ENCODE measurements at regions of chr6 and their contacts with region 1.

Region 1: DNA sequence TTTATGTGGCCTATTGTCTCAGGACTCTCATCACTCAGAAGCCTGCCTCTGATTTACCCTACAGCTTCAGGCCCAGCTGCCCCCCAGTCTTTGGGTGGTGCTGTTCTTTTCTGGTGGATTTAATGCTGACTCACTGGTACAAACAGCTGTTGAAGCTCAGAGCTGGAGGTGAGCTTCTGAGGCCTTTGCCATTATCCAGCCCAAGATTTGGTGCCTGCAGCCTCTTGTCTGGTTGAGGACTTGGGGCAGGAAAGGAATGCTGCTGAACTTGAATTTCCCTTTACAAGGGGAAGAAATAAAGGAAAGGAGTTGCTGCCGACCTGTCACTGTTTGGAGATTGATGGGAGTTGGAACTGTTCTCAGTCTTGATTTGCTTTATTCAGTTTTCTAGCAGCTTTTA is 19.8 kb downstream of the ABCF1 start:
- DNase-seq: peak in 2 of 4 experiments; percentile 29 to 36
- ATAC-seq: peak; percentile 60; the same call in 2 of the 3 replicates
- H3K4me3 ChIP-seq: no peak overlapping the region
- H3K27ac ChIP-seq: peak overlapping the region; percentile 8; the same call in 2 of the 3 replicates
- H3K4me1 ChIP-seq: peaks cover 3 to 4% of the 10 kb centered on the region in 2 experiments; a peak in 3 of 5 replicates
- H3K27me3 ChIP-seq: no peaks in the 10 kb centered on the region
- CTCF ChIP-seq: no peak
- EP300 ChIP-seq: no peak
- POLR2A ChIP-seq: no peak
- RAD21 ChIP-seq: no peak

Region 2: GRCh38 chr6:30571075-30571768 is 19.8 kb before region 1 on chr6 and contains the start of gene ABCF1:
- CTCF ChIA-PET with region 1: no interaction called
- POLR2A ChIA-PET with region 1: interaction called, 21 read pairs
- in situ Hi-C with region 1: no loop called
- intact Hi-C with region 1: no loop called
- DNase-seq: peak; percentile 99
- ATAC-seq: peak; percentile 95
- H3K4me3 ChIP-seq: peak within 1 kb of the TSS; percentile 67
- H3K27ac ChIP-seq: peak within 1 kb of the TSS; percentile 92
- H3K4me1 ChIP-seq: peaks cover 24 to 35% of the 10 kb centered on the region in 2 experiments; a peak in 4 of 5 replicates
- H3K27me3 ChIP-seq: no peaks in the 10 kb centered on the region
- CTCF ChIP-seq: 0 out of 6 replicates have a peak, but pooled peaks of 1 of the 3 experiments have one; percentile 13
- EP300 ChIP-seq: peak; percentile 41; the same call in 1 of the 2 replicates
- POLR2A ChIP-seq: peak; percentile 99
- RAD21 ChIP-seq: no peak
- polyA plus RNA-seq, gene ABCF1: 41.6 to 43.5 TPM

Region 3: DNA sequence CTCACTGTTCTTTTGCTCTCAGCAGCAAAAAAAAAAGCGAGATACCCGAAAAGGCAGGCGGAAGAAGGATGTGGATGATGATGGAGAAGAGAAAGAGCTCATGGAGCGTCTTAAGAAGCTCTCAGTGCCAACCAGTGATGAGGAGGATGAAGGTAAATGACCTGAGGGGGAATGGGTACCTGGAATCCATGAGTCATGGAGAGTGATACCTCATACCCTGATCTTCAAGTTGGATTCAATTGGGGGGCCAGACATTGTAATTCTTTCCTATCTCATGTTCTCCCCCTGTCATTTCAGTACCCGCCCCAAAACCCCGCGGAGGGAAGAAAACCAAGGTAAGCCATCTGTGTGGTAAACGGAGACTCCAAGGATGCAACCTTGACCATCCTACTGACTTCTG is 12.9 kb before region 1 on chr6:
- CTCF ChIA-PET with region 1: no interaction called
- POLR2A ChIA-PET with region 1: interaction called, 21 read pairs
- in situ Hi-C with region 1: no loop called
- intact Hi-C with region 1: no loop called
- DNase-seq: no peak
- ATAC-seq: no peak
- H3K4me3 ChIP-seq: no peak overlapping the region
- H3K27ac ChIP-seq: no peak overlapping the region
- H3K4me1 ChIP-seq: peaks cover 10 to 13% of the 10 kb centered on the region in 2 experiments; a peak in 4 of 5 replicates
- H3K27me3 ChIP-seq: no peaks in the 10 kb centered on the region
- CTCF ChIP-seq: no peak
- EP300 ChIP-seq: no peak
- POLR2A ChIP-seq: no peak
- RAD21 ChIP-seq: no peak

Region 4: GRCh38 chr6:30611150-30611855 is 20.3 kb after region 1 on chr6:
- CTCF ChIA-PET with region 1: no interaction called
- POLR2A ChIA-PET with region 1: interaction called, 310 read pairs
- in situ Hi-C with region 1: no loop called
- intact Hi-C with region 1: no loop called
- DNase-seq: no peak
- ATAC-seq: no peak
- H3K4me3 ChIP-seq: no peak overlapping the region
- H3K27ac ChIP-seq: no peak overlapping the region
- H3K4me1 ChIP-seq: peaks cover 0 to 21% of the 10 kb centered on the region in 2 experiments; a peak in 3 of 5 replicates
- H3K27me3 ChIP-seq: no peaks in the 10 kb centered on the region
- CTCF ChIP-seq: no peak
- EP300 ChIP-seq: no peak
- POLR2A ChIP-seq: peak; percentile 55
- RAD21 ChIP-seq: no peak

Region 5: DNA sequence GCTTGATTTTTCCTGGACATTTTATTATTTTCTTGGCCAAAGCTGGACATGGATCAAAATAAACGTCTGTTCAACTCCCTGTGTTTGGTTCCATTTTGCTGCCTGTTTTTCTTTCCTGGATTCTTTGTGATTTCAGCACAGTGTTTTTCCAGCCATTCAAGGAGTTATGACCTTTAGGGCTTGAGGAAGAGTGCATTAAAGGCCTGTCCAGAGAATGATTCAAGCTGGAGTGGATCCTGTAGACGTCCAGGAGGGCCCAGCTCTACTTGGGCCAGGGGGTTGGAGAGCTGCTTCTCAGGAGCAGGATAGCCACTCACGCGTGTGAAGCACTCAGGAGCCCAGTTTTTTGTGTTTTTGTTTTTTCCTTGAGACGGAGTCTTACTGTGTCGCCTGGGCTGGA is 209.9 kb after region 1 on chr6:
- CTCF ChIA-PET with region 1: no interaction called
- POLR2A ChIA-PET with region 1: no interaction called
- in situ Hi-C with region 1: no loop called
- intact Hi-C with region 1: no loop called
- DNase-seq: no peak
- ATAC-seq: no peak
- H3K4me3 ChIP-seq: no peak overlapping the region
- H3K27ac ChIP-seq: no peak overlapping the region
- H3K4me1 ChIP-seq: peaks cover 18 to 32% of the 10 kb centered on the region in 2 experiments
- H3K27me3 ChIP-seq: no peaks in the 10 kb centered on the region
- CTCF ChIP-seq: no peak
- EP300 ChIP-seq: no peak
- POLR2A ChIP-seq: no peak
- RAD21 ChIP-seq: no peak

Measured in K562 (cell line).